ENCODE measurements at regions of chr1 and their contacts with region 1.

Region 1: GRCh38 chr1:212035123-212035834 is at the starts of genes DTL and INTS7:
- DNase-seq: peak; percentile 93
- ATAC-seq: peak; percentile 86
- H3K4me3 Mint-ChIP-seq: peak within 1 kb of the TSS; percentile 99
- H3K27ac Mint-ChIP-seq: peak within 1 kb of the TSS; percentile 99
- H3K4me1 Mint-ChIP-seq: peaks cover 58% of the 10 kb centered on the region
- H3K27me3 Mint-ChIP-seq: no peaks in the 10 kb centered on the region
- CTCF ChIP-seq: peak; percentile 38
- total RNA-seq, gene DTL: 4.2 and 5.0 TPM in 2 replicates
- total RNA-seq, gene INTS7: 19.1 and 19.9 TPM in 2 replicates

Region 2: DNA sequence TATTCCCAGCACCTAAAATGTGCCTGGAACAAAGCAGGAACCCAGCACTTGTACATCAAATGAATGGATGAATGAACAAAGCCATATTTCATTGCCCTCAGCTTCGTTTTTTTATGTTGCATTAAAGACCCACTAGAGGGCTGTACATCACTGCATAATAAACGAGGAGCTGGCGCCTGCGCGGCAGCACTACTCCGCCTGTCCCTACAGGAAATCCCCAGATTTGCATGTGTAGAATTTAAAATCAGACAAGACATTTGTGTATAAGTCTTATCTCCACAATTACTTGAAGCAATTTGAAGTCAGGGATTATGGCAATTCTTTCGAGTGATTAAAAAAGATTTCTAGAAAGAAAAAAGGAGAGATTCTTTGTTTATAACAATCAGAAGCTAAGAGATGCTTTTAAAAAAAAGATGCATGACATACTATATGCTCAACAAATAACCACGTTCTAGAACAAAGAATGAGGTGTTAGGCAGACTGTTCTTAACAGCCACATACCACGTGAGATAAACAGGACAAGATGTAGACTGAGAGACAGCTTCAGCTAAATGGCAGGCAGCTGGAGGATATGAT is 354.4 kb before region 1 on chr1:
- CTCF ChIA-PET with region 1: interaction called, 44 read pairs
- POLR2A ChIA-PET with region 1: interaction called, 26 read pairs
- intact Hi-C with region 1: loop called (anchors 1 kb)
- DNase-seq: peak; percentile 48
- ATAC-seq: peak; percentile 90
- H3K4me3 Mint-ChIP-seq: peak overlapping the region; percentile 26
- H3K27ac Mint-ChIP-seq: peak overlapping the region; percentile 85
- H3K4me1 Mint-ChIP-seq: peaks cover 41% of the 10 kb centered on the region
- H3K27me3 Mint-ChIP-seq: no peaks in the 10 kb centered on the region
- CTCF ChIP-seq: no peak

Region 3: DNA sequence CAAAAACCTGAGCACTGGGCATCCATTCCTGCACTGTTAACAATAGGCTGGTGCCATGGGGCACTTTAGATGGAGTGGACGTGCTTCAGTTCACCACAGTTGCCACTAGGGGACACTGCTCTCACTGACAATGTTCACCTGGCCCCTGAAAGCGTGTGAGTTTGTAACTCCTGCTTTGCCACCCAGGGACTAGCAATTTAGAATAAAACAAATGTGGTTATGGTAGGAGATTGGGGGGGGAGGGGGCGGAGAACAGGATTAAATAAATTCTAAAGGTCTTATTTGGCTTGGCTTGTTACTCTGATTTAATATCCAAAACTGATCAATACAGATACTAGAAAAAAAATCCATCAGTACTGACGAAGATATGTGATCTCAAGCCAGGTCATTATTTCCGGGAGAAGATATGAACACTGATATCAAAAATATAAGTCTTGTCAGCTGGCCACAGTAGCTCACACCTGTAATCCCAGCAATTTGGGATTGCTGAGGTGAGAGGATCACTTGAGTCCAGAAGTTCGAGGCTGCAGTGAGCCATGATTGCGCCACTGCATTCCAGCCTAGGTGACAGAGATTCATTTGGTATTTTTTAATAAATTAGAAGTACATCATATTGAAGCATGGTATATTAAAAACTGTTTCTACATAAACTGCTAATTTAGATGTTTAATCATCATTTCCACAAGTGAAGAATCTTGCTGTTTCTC is 23.1 kb before region 1 on chr1:
- CTCF ChIA-PET with region 1: interaction called, 8 read pairs
- POLR2A ChIA-PET with region 1: no interaction called
- intact Hi-C with region 1: loop called (anchors 1 kb)
- DNase-seq: no peak
- ATAC-seq: peak; percentile 99
- H3K4me3 Mint-ChIP-seq: no peak overlapping the region
- H3K27ac Mint-ChIP-seq: no peak overlapping the region
- H3K4me1 Mint-ChIP-seq: no peaks in the 10 kb centered on the region
- H3K27me3 Mint-ChIP-seq: no peaks in the 10 kb centered on the region
- CTCF ChIP-seq: peak; percentile 64

Region 4: GRCh38 chr1:212077051-212077450 is 41.8 kb after region 1 on chr1:
- CTCF ChIA-PET with region 1: no interaction called
- POLR2A ChIA-PET with region 1: no interaction called
- intact Hi-C with region 1: no loop called
- DNase-seq: no peak
- ATAC-seq: no peak
- H3K4me3 Mint-ChIP-seq: no peak overlapping the region
- H3K27ac Mint-ChIP-seq: no peak overlapping the region
- H3K4me1 Mint-ChIP-seq: no peaks in the 10 kb centered on the region
- H3K27me3 Mint-ChIP-seq: no peaks in the 10 kb centered on the region
- CTCF ChIP-seq: no peak

Region 5: DNA sequence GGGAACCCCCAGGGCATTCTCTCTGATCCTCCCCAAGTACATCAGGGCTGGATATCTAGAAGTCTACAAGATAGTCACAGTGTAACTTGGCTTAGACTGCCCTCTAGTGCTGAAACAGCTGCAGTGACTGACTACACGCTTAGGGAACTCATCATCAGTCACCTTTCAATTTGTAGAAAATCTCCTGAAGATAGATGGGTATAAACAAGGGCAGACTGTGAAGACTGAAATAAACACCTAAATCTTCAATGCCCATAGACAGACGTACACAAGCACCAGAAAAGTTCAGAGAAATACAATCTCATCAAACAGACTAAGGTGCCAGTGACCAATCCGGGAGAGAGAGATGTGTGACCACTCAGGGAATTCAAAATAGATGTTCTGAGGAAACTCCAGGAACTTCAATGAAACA is 332.8 kb after region 1 on chr1:
- CTCF ChIA-PET with region 1: interaction called, 4 read pairs
- POLR2A ChIA-PET with region 1: no interaction called
- intact Hi-C with region 1: loop called (anchors 1 kb)
- DNase-seq: no peak
- ATAC-seq: peak; percentile 89
- H3K4me3 Mint-ChIP-seq: no peak overlapping the region
- H3K27ac Mint-ChIP-seq: no peak overlapping the region
- H3K4me1 Mint-ChIP-seq: no peaks in the 10 kb centered on the region
- H3K27me3 Mint-ChIP-seq: no peaks in the 10 kb centered on the region
- CTCF ChIP-seq: peak; percentile 25

Region 6: GRCh38 chr1:212455803-212456528 is 420.7 kb after region 1 on chr1:
- CTCF ChIA-PET with region 1: interaction called, 24 read pairs
- POLR2A ChIA-PET with region 1: interaction called, 4 read pairs
- intact Hi-C with region 1: loop called (anchors 1 kb)
- DNase-seq: peak; percentile 76
- ATAC-seq: peak; percentile 83
- H3K4me3 Mint-ChIP-seq: no peak overlapping the region
- H3K27ac Mint-ChIP-seq: no peak overlapping the region
- H3K4me1 Mint-ChIP-seq: peaks cover 4% of the 10 kb centered on the region
- H3K27me3 Mint-ChIP-seq: no peaks in the 10 kb centered on the region
- CTCF ChIP-seq: peak; percentile 98

Region 7: DNA sequence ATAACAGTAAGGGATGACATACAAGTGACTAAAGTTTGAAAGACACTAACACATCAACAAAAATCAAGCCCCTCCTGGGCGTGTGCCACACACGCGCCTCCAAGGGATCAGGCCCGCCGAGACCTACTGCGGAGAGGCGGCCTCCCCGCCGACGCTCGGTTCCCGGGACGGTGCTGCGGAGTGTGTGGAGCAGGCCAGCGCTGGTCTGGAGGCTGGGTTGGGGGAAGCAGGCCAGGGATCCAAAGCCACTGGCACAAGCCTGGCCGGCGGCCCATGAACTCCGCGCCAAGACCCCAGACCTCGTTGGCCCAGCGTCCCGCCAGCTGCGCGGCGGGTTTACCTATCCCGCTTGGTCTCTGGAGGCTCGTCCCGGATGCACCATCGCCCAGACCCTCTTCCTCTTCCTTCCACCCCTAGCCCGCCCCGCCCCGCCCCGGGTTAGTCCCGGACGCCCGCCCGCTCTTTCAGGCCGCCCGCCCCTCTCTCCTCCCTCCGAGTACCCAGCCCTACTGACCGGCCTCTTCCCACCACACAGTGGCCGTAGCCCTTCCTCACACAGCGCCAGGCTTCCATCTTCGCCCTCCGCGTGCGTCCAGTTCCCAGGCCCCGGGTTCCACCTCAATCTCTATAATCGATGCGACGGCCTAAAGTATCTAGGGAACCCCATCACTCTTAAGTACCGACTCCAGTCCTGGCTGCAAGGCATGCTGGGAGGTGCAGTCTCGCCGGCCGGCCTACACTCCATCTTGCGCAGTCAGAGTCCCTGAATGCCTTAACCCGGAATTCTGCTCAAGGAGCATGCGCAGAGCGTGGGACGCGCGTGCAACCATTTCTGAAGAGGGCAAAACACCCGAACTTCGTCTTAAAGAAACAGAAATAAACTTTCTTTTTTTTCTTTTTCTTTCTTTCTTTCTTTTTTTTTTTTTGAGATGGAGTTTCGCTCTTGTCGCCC is 980.1 kb after region 1 on chr1 and contains the start of gene ANGEL2:
- CTCF ChIA-PET with region 1: interaction called, 5 read pairs
- POLR2A ChIA-PET with region 1: no interaction called
- intact Hi-C with region 1: loop called (anchors 10 kb)
- DNase-seq: peak; percentile 87
- ATAC-seq: peak; percentile 95
- H3K4me3 Mint-ChIP-seq: peak within 1 kb of the TSS; percentile 100
- H3K27ac Mint-ChIP-seq: peak within 1 kb of the TSS; percentile 99
- H3K4me1 Mint-ChIP-seq: peaks cover 20% of the 10 kb centered on the region
- H3K27me3 Mint-ChIP-seq: no peaks in the 10 kb centered on the region
- CTCF ChIP-seq: no peak
- total RNA-seq, gene ANGEL2: 54.1 and 63.3 TPM in 2 replicates

Measured in activated B cell treated with CpG ODN at 0.5 μM for 24 hours (primary cell).